AG04449 (cell line): ENCODE measurements at regions of chr6 and their contacts with region 1.

Region 1: GRCh38 chr6:32868257-32868788 is 14.3 kb downstream of the PSMB9 start:
- DNase-seq: no peak
- H3K4me3 ChIP-seq: no peak overlapping the region
- CTCF ChIP-seq: peak; percentile 70

Region 2: GRCh38 chr6:32432050-32432450 is 436.3 kb before region 1 on chr6:
- CTCF ChIA-PET with region 1: interaction called, 17 read pairs
- POLR2A ChIA-PET with region 1: no interaction called
- DNase-seq: no peak
- H3K4me3 ChIP-seq: no peak overlapping the region
- CTCF ChIP-seq: no peak

Region 3: GRCh38 chr6:32807020-32807580 is 61.2 kb before region 1 on chr6:
- CTCF ChIA-PET with region 1: interaction called, 16 read pairs
- POLR2A ChIA-PET with region 1: no interaction called
- DNase-seq: no peak
- H3K4me3 ChIP-seq: no peak overlapping the region
- CTCF ChIP-seq: no peak

Region 4: GRCh38 chr6:32838114-32838958 is 30.0 kb before region 1 on chr6 and contains the start of gene TAP2:
- CTCF ChIA-PET with region 1: interaction called, 402 read pairs
- POLR2A ChIA-PET with region 1: interaction called, 5 read pairs
- DNase-seq: peak; percentile 47
- H3K4me3 ChIP-seq: peak within 1 kb of the TSS; percentile 96
- CTCF ChIP-seq: peak; percentile 97

Region 5: DNA sequence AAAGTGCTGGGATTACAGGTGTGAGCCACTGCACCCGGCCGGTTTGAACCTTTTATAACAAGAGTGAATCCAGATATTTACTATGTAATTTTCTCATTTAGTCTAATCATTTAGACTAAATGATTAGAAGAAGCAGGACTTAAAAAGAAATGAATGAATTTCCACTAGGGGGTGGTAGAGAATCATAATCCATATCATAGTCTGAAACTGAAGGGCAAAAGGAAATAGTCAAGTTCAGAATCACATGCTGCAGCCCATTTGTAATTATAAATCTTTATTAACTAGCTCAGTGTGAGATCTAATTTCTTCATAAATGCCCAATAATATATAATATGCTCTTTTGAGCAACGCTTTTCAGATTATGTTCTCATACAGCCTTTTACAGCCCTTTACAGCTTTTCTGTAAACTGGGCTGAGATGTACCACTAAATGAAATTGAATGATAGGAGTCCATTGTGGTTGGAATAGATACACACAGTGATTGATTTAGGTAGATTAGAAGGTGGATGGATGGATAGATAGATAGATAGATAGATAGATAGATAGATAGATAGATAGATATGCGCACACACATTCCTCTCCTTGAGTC is 17.5 kb after region 1 on chr6:
- CTCF ChIA-PET with region 1: interaction called, 30 read pairs
- POLR2A ChIA-PET with region 1: no interaction called
- DNase-seq: no peak
- H3K4me3 ChIP-seq: no peak overlapping the region
- CTCF ChIP-seq: peak; percentile 19

Region 6: DNA sequence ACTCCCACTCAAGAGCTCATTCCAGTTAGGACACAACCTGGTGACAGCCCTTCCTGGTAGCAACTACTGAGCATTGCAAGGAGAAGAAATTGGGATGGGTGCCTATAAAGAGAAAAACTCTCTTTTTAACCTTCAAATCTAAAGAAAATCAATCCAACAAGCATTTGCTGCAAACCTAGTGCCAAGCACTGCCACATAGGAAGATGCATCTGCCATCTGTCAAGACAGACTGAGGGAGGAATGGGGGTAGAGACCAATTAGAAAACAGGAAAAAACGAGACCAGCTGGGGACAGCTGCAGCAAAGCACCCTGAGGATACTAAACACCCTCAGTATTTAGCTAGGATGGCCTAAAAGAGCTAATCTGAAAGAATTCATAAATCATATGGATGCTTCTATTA is 44.6 kb after region 1 on chr6:
- CTCF ChIA-PET with region 1: interaction called, 10 read pairs
- POLR2A ChIA-PET with region 1: no interaction called
- DNase-seq: no peak
- H3K4me3 ChIP-seq: no peak overlapping the region
- CTCF ChIP-seq: no peak

Region 7: DNA sequence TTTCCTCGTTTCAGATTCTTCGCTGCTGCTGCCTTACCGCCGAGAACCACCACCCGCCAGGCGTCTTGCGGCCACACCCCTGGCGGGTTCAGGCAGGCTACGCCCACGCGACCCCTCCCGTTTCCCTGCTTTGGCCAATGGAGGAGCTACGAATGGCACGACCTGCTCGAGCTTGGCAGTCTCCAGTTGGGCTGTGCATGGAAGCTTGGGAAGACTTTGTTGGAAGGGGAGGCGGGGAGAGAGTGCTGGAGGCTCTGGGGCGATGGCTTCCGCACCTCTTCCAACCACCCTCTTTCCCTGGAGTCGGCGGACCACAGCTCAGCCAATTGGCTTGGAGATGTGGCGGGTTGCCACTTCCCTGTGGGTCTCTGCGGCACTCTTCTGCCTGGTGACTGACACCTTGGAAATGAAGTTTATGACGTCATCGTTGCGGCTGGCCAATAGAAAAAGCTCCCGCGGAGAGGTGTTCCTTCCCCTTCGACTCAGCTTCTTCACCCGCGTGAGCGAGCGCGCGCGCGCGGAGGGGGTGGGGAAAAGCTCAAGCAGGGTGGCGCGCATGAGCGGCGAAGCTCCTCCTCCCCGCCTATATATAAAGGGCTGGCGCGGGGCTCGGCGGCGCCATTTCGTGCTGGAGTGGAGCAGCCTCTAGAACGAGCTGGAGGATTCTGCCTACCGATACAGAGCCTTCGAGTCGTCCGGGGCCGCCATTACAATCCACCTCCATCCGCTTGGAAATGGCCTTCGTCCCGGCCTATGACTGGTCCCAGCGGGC is 103.4 kb after region 1 on chr6:
- CTCF ChIA-PET with region 1: interaction called, 12 read pairs
- POLR2A ChIA-PET with region 1: interaction called, 3 read pairs
- DNase-seq: peak; percentile 99
- H3K4me3 ChIP-seq: peak overlapping the region; percentile 92
- CTCF ChIP-seq: no peak